ENCODE measurements at regions of chr12 and their contacts with region 1.

Region 1: GRCh38 chr12:89451841-89452251 is 72.8 kb downstream of the GALNT4 start:
- DNase-seq: no peak
- ATAC-seq: peak in 3 of 4 donors; percentile 22 to 37 (median 34)
- H3K4me3 ChIP-seq: no peak overlapping the region
- H3K27ac ChIP-seq: no peak overlapping the region
- H3K4me1 ChIP-seq: no peaks in the 10 kb centered on the region
- H3K27me3 ChIP-seq: no peaks in the 10 kb centered on the region
- CTCF ChIP-seq: no peak

Region 2: DNA sequence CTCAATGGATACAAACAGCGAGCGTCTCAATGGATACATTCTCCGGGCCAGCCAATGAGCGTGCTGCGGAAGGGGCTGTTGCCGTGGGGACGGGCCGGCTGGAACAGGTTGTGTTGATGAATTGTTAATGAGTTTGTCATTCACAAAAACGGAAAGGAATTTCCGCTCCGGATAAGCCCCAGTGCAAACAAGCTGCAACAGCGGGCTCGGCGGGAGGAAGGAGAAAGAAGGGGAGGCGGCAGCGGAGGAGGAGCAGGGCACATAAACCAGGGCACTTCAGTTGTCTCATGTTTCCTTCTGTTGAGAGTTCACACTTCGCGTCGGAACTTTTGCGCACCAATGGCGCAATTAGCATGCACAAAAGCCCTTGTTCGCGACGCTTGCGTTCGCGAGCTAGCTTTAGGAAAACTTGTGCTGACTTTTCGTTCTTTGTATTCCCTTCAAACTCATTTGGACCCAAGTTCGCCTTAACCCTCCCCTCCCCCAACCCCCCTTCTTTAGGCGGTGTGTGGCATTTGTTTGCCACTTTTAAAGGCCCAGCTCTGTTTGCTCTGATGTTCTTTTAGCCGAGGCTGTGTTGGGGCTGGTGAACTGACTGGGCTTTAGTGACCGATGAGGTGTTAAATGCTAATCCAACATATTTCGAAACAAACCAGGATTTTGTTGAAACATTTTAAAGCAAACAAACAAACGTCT is 99.2 kb before region 1 on chr12 and contains the start of gene DUSP6:
- intact Hi-C with region 1: loop called in 1 of 3 experiments (anchors 10 kb)
- DNase-seq: peak; percentile 90 to 96 (median 94)
- ATAC-seq: peak; percentile 57 to 76 (median 68)
- H3K4me3 ChIP-seq: peak within 1 kb of the TSS; percentile 69 to 82 (median 76)
- H3K27ac ChIP-seq: peak within 1 kb of the TSS; percentile 98 to 100 (median 99)
- H3K4me1 ChIP-seq: peaks cover 15 to 28% (median 18%) of the 10 kb centered on the region in 3 donors
- H3K27me3 ChIP-seq: no peaks in the 10 kb centered on the region
- CTCF ChIP-seq: no peak
- total RNA-seq, gene DUSP6: 5.3 to 26.1 (median 15.3) TPM

Region 3: GRCh38 chr12:89846473-89847055 is 394.7 kb after region 1 on chr12:
- intact Hi-C with region 1: no loop called
- DNase-seq: no peak
- ATAC-seq: peak in 1 of 4 donors; percentile 19
- H3K4me3 ChIP-seq: no peak overlapping the region
- H3K27ac ChIP-seq: no peak overlapping the region
- H3K4me1 ChIP-seq: no peaks in the 10 kb centered on the region
- H3K27me3 ChIP-seq: no peaks in the 10 kb centered on the region
- CTCF ChIP-seq: no peak